H1 (cell line): ENCODE measurements at regions of chr17 and their contacts with region 1.

Region 1: DNA sequence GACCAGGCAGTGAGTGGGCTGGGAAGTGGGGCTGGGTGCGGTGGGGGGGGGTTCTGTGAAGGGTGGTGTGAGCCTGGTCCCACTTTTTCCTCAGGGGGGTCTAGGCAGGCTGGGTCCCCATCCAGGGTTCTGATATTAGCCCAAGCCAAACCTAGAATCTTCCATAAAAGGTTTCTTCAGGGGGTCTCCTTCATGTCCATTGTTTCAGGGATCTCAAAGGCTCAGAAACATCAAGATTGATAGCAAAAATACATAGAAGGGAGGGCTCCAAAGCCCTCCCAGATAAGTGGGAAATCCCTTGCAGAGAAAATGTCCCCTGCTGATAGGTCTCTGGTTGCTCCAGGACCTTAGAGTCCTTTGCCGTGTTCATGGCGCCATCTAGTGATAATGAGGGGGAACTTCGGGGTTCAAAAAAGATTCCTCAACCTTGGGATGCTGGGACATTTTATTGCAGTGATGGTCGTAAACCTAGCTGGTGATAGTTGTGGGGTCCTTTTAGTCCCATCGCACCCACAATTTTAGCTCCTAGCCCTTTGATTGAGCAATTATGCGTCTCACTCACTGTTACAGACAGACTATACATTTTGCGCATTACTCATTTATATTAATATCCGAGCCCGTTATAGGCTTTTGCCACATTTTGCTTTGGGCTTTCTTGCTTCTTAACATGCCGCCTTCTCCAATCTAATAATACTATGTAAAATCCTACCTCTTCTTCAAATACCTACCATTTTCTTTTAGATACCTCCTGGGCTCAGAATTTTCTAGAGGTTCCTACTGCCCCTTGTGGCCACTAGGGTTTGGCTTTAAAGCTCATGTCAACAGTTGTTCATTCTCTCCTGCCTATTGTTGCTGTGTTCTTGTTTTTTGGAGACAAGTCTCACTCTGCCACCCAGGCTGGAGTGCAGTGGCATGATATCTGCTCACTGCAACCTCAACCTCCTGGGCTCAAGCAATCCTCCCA is 35.1 kb downstream of the IGF2BP1 start:
- DNase-seq: peak in 1 of 2 experiments; percentile 60
- H3K4me3 ChIP-seq: no peak overlapping the region
- H3K27ac ChIP-seq: 0 out of 2 replicates have a peak overlapping the region, but pooled peaks have one; percentile 21
- H3K4me1 ChIP-seq: peaks cover 2 to 8% (median 5%) of the 10 kb centered on the region in 4 experiments; a peak in 4 of 7 replicates
- H3K27me3 ChIP-seq: no peaks in the 10 kb centered on the region
- CTCF ChIP-seq: peak; percentile 55 to 91 (median 90)
- EP300 ChIP-seq: 0 out of 3 replicates have a peak, but pooled peaks of 1 of the 2 experiments have one; percentile 51
- POLR2A ChIP-seq: 0 out of 3 replicates have a peak, but pooled peaks of 1 of the 2 experiments have one; percentile 33
- RAD21 ChIP-seq: peak; percentile 97 to 99

Region 2: GRCh38 chr17:48915459-48916282 is 116.6 kb before region 1 on chr17:
- CTCF ChIA-PET with region 1: interaction called, 13 read pairs
- POLR2A ChIA-PET with region 1: no interaction called
- DNase-seq: no peak
- H3K4me3 ChIP-seq: no peak overlapping the region
- H3K27ac ChIP-seq: no peak overlapping the region
- H3K4me1 ChIP-seq: peaks cover 0 to 5% (median 0%) of the 10 kb centered on the region in 4 experiments; a peak in 1 of 7 replicates
- H3K27me3 ChIP-seq: no peaks in the 10 kb centered on the region
- CTCF ChIP-seq: no peak
- EP300 ChIP-seq: no peak
- POLR2A ChIP-seq: no peak
- RAD21 ChIP-seq: no peak

Region 3: DNA sequence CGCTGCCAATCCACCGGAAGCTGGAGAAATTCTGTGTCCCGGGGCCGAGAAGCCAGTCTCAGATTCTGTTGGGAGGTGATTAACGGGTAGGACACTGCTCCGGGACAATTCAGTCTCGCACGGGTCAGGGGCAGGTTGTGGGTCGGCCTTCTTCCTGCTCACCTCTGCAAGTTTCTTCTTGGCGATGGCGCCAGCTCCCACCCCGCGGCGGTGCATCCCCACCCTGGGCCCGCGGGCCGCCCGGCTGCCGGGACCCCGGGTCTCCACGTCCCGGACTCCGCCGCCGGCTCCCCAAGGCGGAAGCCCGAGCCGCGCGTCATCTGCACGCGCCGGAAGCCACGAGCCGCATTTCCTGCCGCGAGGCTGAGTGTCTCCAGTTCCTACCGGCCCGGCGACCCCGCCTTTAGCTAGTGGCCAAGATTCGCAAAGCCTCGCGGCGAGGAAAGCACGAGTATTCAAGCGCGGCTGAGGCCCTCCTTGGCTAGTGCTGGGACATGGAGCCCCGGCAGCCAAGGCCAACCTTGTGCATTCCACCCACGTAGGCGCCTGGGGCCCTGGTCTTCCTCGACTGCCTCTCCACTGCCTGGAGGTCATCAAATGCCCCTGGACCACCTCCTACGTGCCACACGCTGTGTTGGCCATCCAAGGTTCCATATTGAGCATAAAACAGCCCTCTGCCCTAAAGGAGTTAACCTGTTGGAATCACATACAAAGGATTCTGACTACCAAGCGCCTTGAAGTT is 87.6 kb before region 1 on chr17 and contains the start of gene SNF8:
- CTCF ChIA-PET with region 1: interaction called, 24 read pairs
- POLR2A ChIA-PET with region 1: interaction called, 13 read pairs
- DNase-seq: peak; percentile 75 to 98
- H3K4me3 ChIP-seq: peak within 1 kb of the TSS; percentile 64 to 93 (median 88)
- H3K27ac ChIP-seq: peak within 1 kb of the TSS; percentile 95
- H3K4me1 ChIP-seq: peaks cover 3 to 7% (median 4%) of the 10 kb centered on the region in 4 experiments; a peak in 4 of 7 replicates
- H3K27me3 ChIP-seq: no peaks in the 10 kb centered on the region
- CTCF ChIP-seq: no peak
- EP300 ChIP-seq: peak in 1 of 2 experiments; percentile 11; a peak in 1 of 3 replicates
- POLR2A ChIP-seq: peak; percentile 84 to 98
- RAD21 ChIP-seq: peak in 1 of 2 experiments; percentile 3; a peak in 1 of 4 replicates
- total RNA-seq, gene SNF8: 130 and 133 TPM in 2 replicates

Region 4: DNA sequence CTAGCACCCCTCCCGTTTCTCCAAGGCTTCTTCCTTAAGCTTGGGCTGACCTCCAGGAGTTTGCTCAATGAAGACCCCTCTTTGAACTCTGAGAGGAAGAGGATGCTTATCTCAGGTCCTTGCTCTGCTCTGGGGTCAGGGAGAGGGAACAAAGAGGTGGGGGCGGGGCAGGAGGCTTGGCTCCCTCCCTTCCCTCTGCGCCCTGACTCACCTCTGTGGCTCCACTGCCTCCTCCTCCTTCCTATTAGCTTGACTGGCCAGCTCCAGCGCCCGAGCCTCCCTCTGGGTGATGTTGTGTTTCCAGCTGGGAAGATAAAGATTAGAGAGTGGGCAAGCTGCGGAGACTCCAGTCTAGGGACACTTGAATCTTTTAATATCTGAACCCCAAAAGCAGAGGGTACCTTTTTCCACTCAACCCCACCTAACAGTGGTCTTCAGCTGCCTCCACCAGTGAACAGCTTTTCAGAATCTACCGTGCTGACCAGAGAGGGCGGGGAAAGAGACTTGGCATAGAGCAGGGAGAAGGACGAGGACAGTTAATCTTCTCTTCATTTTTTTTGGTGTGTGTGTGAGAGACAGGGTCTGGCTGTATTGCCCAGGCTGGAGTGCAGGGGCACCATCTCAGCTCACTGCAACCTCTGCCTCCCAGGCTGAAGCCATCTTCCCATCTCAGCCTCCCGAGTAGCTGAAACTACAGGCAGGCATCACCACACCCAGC is 70.6 kb before region 1 on chr17:
- CTCF ChIA-PET with region 1: interaction called, 64 read pairs
- POLR2A ChIA-PET with region 1: interaction called, 5 read pairs
- DNase-seq: peak in 1 of 2 experiments; percentile 66
- H3K4me3 ChIP-seq: peak overlapping the region in 2 of 4 experiments; percentile 14 to 25; a peak in 1 of 8 replicates
- H3K27ac ChIP-seq: no peak overlapping the region
- H3K4me1 ChIP-seq: peaks cover 8 to 17% (median 13%) of the 10 kb centered on the region in 4 experiments; a peak in 6 of 7 replicates
- H3K27me3 ChIP-seq: no peaks in the 10 kb centered on the region; a peak in 1 of 7 replicates
- CTCF ChIP-seq: no peak
- EP300 ChIP-seq: no peak
- POLR2A ChIP-seq: no peak
- RAD21 ChIP-seq: no peak

Region 5: GRCh38 chr17:48997083-48997826 is 35.0 kb before region 1 on chr17 and contains the start of gene IGF2BP1:
- CTCF ChIA-PET with region 1: interaction called, 74 read pairs
- POLR2A ChIA-PET with region 1: interaction called, 43 read pairs
- DNase-seq: peak; percentile 77 to 82
- H3K4me3 ChIP-seq: peak within 1 kb of the TSS; percentile 91 to 100 (median 96)
- H3K27ac ChIP-seq: peak within 1 kb of the TSS; percentile 98
- H3K4me1 ChIP-seq: peaks cover 0 to 10% (median 4%) of the 10 kb centered on the region in 4 experiments; a peak in 4 of 7 replicates
- H3K27me3 ChIP-seq: no peaks in the 10 kb centered on the region
- CTCF ChIP-seq: no peak
- EP300 ChIP-seq: peak in 1 of 2 experiments; percentile 21; a peak in 1 of 3 replicates
- POLR2A ChIP-seq: peak; percentile 19 to 58
- RAD21 ChIP-seq: no peak
- total RNA-seq, gene IGF2BP1: 487 and 513 TPM in 2 replicates

Region 6: DNA sequence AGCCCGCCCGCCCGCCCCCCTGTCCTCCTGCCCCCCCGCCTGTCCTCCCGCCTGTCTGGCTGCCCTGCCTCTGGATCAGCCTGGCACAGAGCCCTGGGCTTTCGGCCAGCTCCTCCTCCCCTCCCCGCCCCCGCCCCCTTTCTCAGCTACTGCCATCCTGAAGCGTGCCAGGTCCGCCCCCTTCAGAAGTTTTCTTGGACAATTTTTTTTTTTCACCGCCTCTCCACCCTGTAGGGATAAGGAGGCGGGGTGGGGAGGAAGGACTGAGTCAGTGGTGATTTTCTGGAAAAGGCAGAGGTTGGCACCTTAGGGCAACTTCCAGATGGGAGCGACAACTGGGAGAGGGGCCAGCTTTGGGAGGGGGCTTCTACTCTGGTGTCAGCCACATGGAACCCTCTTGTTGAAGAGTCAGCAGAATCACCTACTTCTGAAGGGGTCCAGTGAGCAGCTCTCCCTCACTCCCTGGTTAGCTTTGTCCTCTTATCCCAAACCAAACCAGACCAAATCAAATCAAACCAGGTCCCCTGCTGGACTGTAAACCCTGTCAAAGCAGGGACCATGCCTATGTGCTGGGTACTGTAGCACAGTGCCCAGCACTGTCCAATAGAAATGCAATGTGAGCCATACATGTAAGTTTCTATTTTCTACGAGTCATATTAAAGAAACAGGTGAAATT is 15.3 kb before region 1 on chr17:
- CTCF ChIA-PET with region 1: interaction called, 222 read pairs
- POLR2A ChIA-PET with region 1: interaction called, 141 read pairs
- DNase-seq: peak in 1 of 2 experiments; percentile 46
- H3K4me3 ChIP-seq: no peak overlapping the region
- H3K27ac ChIP-seq: no peak overlapping the region
- H3K4me1 ChIP-seq: peaks cover 28 to 51% (median 40%) of the 10 kb centered on the region in 4 experiments
- H3K27me3 ChIP-seq: no peaks in the 10 kb centered on the region
- CTCF ChIP-seq: no peak
- EP300 ChIP-seq: no peak
- POLR2A ChIP-seq: no peak
- RAD21 ChIP-seq: no peak

Region 7: GRCh38 chr17:49053171-49053829 is 21.1 kb after region 1 on chr17:
- CTCF ChIA-PET with region 1: interaction called, 34 read pairs
- POLR2A ChIA-PET with region 1: interaction called, 15 read pairs
- DNase-seq: peak in 1 of 2 experiments; percentile 55
- H3K4me3 ChIP-seq: no peak overlapping the region
- H3K27ac ChIP-seq: no peak overlapping the region
- H3K4me1 ChIP-seq: peaks cover 10 to 23% (median 19%) of the 10 kb centered on the region in 4 experiments
- H3K27me3 ChIP-seq: no peaks in the 10 kb centered on the region
- CTCF ChIP-seq: no peak
- EP300 ChIP-seq: no peak
- POLR2A ChIP-seq: peak; percentile 34 to 58; a peak in 2 of 3 replicates
- RAD21 ChIP-seq: peak in 1 of 2 experiments; percentile 22; a peak in 1 of 4 replicates

Region 8: DNA sequence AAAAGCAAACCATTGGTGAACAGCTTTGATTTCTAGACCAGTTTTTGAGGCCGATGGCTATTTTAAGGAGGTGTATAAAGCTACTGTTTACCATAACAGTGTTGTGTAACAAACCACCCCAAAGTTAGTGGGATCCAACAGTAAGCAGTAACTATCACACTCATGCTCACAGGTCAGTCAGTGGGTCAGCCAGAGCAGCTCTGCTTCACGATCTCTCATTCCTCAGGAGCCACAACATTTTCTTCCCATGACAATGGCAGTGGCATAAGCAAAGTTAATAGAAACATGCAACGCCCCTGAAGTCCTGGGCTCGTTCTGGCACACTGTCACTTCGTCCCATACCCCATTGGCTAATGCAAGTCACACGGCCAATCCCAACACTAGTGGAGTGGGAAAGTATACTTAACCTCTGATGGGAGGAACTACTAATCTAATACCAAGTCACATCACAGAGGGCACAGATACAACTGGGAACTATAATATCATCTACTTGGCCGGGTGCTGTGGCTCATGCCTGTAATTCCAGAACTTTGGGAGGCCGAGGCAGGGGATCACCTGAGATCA is 72.3 kb after region 1 on chr17:
- CTCF ChIA-PET with region 1: no interaction called
- POLR2A ChIA-PET with region 1: no interaction called
- DNase-seq: no peak
- H3K4me3 ChIP-seq: no peak overlapping the region
- H3K27ac ChIP-seq: no peak overlapping the region
- H3K4me1 ChIP-seq: peaks cover 4 to 9% (median 7%) of the 10 kb centered on the region in 4 experiments
- H3K27me3 ChIP-seq: no peaks in the 10 kb centered on the region; a peak in 1 of 7 replicates
- CTCF ChIP-seq: no peak
- EP300 ChIP-seq: no peak
- POLR2A ChIP-seq: no peak
- RAD21 ChIP-seq: no peak